T-cell (primary cell): ENCODE measurements at regions of chr1 and their contacts with region 1.

Region 1: DNA sequence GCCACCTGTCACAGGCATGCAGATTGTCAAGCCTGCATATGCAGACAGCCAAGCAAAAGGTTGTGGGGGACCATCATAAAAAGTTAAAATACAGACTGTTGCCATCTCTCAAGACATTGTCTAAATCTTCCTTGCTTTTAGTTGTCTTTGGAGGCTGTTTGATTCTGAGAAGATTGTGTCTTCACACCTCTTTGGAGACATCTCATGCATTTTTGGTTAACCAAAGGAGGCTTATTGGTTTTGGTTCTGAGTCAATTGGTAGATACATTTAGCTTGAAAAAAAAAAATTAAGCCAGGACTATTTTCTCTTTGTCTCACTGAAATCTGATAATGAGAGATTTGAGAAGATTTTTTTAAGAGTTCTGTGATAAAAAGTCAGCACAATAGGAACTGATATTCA is 217.6 kb downstream of the LYPLAL1 start:
- DNase-seq: no peak
- ATAC-seq: no peak
- H3K4me3 ChIP-seq: no peak overlapping the region
- H3K4me3 Mint-ChIP-seq: no peak overlapping the region
- H3K27ac ChIP-seq: no peak overlapping the region
- H3K27ac Mint-ChIP-seq: no peak overlapping the region
- H3K4me1 ChIP-seq: no peaks in the 10 kb centered on the region
- H3K4me1 Mint-ChIP-seq: no peaks in the 10 kb centered on the region
- H3K27me3 ChIP-seq: no peaks in the 10 kb centered on the region
- H3K27me3 Mint-ChIP-seq: no peaks in the 10 kb centered on the region

Region 2: DNA sequence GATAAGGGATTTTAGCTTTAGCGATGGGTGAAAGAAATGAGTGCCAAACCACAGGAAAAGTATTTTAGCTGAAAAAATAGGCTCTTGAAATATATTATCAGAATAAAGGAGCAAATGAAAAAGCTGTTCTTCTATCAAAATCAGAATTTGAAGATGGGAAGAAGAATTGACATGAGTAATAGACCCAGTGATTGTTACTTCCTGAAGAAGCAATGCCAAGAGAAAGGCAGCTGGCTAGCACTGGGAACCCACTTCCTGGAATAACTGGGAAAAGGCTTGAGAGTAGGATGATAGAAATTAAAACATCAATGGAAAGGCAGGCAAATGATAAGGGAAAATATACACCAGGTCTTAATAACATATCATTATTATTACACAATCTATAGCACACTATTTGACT is 247.6 kb before region 1 on chr1:
- CTCF ChIA-PET with region 1: no interaction called
- POLR2A ChIA-PET with region 1: no interaction called
- DNase-seq: no peak
- ATAC-seq: no peak
- H3K4me3 ChIP-seq: no peak overlapping the region
- H3K4me3 Mint-ChIP-seq: no peak overlapping the region
- H3K27ac ChIP-seq: no peak overlapping the region
- H3K27ac Mint-ChIP-seq: no peak overlapping the region
- H3K4me1 ChIP-seq: no peaks in the 10 kb centered on the region
- H3K4me1 Mint-ChIP-seq: no peaks in the 10 kb centered on the region
- H3K27me3 ChIP-seq: no peaks in the 10 kb centered on the region
- H3K27me3 Mint-ChIP-seq: peaks cover 0 to 2% of the 10 kb centered on the region in 2 donors

Region 3: DNA sequence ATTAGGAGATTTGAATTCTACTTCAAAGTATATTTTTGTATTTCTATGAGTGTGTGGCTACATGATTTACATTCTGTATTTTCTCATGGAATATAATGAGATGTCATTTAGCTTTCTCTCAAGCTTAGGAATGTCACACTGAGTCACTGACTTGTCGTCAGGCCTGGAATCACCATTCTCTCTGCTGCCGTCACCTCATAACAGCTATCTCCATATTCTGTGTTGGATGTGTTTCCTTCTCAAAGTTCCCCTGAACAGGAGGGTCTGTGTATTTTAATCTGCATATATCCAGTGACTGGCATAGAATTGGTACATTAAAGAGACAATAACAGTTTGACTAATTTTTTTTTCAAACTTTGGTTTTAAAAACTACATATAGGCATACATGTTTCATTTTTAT is 181.7 kb before region 1 on chr1:
- CTCF ChIA-PET with region 1: no interaction called
- POLR2A ChIA-PET with region 1: no interaction called
- DNase-seq: no peak
- ATAC-seq: no peak
- H3K4me3 ChIP-seq: no peak overlapping the region
- H3K4me3 Mint-ChIP-seq: no peak overlapping the region
- H3K27ac ChIP-seq: no peak overlapping the region
- H3K27ac Mint-ChIP-seq: no peak overlapping the region
- H3K4me1 ChIP-seq: no peaks in the 10 kb centered on the region
- H3K4me1 Mint-ChIP-seq: no peaks in the 10 kb centered on the region
- H3K27me3 ChIP-seq: no peaks in the 10 kb centered on the region
- H3K27me3 Mint-ChIP-seq: no peaks in the 10 kb centered on the region

Region 4: GRCh38 chr1:219373616-219373935 is 17.7 kb before region 1 on chr1:
- CTCF ChIA-PET with region 1: interaction called, 3 to 4 read pairs
- POLR2A ChIA-PET with region 1: interaction called in 1 of 2 experiments, 11 read pairs
- DNase-seq: no peak
- ATAC-seq: no peak
- H3K4me3 ChIP-seq: no peak overlapping the region
- H3K4me3 Mint-ChIP-seq: no peak overlapping the region
- H3K27ac ChIP-seq: no peak overlapping the region
- H3K27ac Mint-ChIP-seq: no peak overlapping the region
- H3K4me1 ChIP-seq: no peaks in the 10 kb centered on the region
- H3K4me1 Mint-ChIP-seq: no peaks in the 10 kb centered on the region
- H3K27me3 ChIP-seq: no peaks in the 10 kb centered on the region
- H3K27me3 Mint-ChIP-seq: no peaks in the 10 kb centered on the region